Heart right ventricle (tissue), 16 donors: ENCODE measurements at regions of chr11 and their contacts with region 1.

Region 1: GRCh38 chr11:63838678-63839507 is at the start of gene MARK2:
- DNase-seq: peak; percentile 98 to 99
- ATAC-seq: peak; percentile 90 to 96 (median 94)
- H3K4me3 ChIP-seq: peak within 1 kb of the TSS; percentile 54 to 97 (median 92)
- H3K27ac ChIP-seq: peak within 1 kb of the TSS; percentile 70 to 95 (median 86)
- H3K4me1 ChIP-seq: peaks cover 17 to 59% (median 53%) of the 10 kb centered on the region in 9 donors
- H3K27me3 ChIP-seq: no peaks in the 10 kb centered on the region
- CTCF ChIP-seq: no peak
- total RNA-seq, gene MARK2: 33.8 to 42.7 (median 39.0) TPM

Region 2: DNA sequence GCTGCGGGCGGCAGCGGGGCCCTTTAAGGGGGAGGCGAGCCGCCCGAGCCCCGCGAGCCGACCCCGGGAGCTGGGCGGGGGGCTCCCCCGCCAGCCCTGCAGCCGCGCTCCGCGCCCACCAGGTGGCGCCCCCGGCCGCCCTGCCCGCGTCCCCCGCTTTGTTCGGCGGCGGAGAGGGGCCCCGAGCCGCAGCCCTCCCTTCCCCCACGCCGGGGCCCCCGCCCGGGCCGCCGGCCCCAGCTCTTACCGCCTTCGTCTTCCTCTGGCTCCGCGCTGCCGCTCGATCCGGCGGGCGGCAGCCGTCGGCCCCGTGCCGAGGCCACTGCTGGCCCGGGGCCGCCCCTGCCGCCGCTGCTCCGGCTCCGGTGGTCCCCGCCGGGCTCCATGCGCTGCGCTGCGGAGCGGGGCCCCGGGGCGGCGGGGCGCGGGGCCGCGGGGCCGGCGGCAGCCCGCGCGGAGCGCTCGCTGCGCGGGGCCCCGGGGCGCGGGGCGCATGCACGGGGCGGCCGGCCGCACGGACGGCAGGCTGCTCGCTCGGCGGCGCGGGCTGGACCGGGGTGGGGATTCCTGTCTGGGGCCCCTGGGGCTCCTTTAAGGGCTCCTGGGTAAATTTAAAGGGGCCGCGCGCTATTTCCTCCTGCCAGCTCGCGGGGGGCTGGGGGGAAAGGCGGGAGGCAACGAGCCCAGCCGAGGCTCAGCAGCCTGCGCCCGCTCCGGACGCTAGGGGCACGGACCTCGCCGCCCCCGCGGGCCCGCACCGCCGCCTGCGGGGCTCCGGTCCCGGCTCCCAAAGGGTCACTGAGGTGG is 70.5 kb before region 1 on chr11 and contains the start of gene ZFTA:
- intact Hi-C with region 1: loop called in 2 of 10 experiments (anchors 2 kb)
- DNase-seq: peak; percentile 74 to 75
- ATAC-seq: peak; percentile 7 to 51 (median 26)
- H3K4me3 ChIP-seq: peak within 1 kb of the TSS; percentile 70 to 89 (median 84)
- H3K27ac ChIP-seq: peak within 1 kb of the TSS; percentile 60 to 94 (median 86)
- H3K4me1 ChIP-seq: peaks cover 7 to 40% (median 25%) of the 10 kb centered on the region in 9 donors
- H3K27me3 ChIP-seq: peaks cover 0 to 23% (median 0%) of the 10 kb centered on the region in 7 donors
- CTCF ChIP-seq: peak; percentile 26 to 96 (median 65)
- total RNA-seq, gene ZFTA: 6.8 to 14.3 (median 8.9) TPM

Region 3: DNA sequence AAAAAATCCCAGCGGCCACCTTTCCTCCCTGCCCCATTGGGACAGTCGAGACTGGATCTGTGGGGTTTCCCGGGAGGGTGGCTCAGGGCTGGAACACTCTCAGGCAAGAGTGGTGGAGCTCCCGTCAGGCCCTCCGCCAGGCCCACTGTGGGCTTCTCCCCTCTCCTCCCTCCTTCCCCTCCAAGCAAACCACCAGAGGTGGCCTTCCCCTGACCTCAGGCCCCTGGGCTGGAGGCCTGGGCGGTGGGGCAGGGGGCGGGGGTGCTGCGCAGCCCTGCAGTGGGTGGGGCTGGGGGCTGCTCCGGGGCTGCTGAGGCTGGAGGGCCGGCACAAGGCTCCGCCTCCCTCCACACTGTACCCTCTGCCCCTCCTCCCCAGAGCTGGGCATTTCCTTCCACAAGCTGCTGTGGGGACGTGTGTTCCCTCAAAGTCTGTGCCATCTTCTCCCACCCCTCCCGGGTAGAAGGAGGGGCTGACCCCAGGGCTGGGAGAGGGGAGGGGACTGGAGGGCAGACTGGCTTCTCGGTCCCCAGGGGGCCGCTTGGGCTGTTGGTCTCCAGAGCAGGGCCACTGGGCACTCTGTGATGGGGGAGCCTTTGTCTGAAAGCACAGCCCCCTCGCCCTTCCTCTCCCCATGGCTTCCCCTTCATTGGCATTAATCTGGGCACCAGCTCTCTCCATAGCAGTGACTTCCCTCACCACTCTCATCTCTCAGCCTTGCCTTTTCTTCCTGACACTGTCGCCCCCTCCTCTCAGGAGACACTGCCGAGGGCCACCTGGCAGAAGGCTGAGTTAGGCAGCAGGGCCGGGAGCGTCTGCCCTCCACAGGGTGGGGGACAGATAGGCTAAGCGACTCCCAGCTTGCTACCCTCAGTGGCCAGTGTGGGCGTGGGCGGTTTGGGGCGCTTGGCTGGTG is 71.0 kb after region 1 on chr11:
- intact Hi-C with region 1: loop called in 1 of 10 experiments (anchors 2 kb)
- DNase-seq: no peak
- ATAC-seq: peak in 3 of 8 donors; percentile 10 to 18 (median 13)
- H3K4me3 ChIP-seq: no peak overlapping the region
- H3K27ac ChIP-seq: peak overlapping the region in 2 of 10 donors; percentile 10 to 19
- H3K4me1 ChIP-seq: peaks cover 4 to 41% (median 13%) of the 10 kb centered on the region in 9 donors
- H3K27me3 ChIP-seq: no peaks in the 10 kb centered on the region
- CTCF ChIP-seq: no peak

Region 4: GRCh38 chr11:63945477-63946163 is 106.7 kb after region 1 on chr11:
- intact Hi-C with region 1: loop called (anchors 1 to 2 kb)
- DNase-seq: peak; percentile 46 to 77
- ATAC-seq: peak; percentile 79 to 94 (median 85)
- H3K4me3 ChIP-seq: peak overlapping the region in 7 of 10 donors; percentile 13 to 41 (median 30)
- H3K27ac ChIP-seq: peak overlapping the region; percentile 20 to 79 (median 72)
- H3K4me1 ChIP-seq: peaks cover 8 to 44% (median 21%) of the 10 kb centered on the region in 9 donors
- H3K27me3 ChIP-seq: no peaks in the 10 kb centered on the region
- CTCF ChIP-seq: peak; percentile 58 to 88 (median 80)

Region 5: DNA sequence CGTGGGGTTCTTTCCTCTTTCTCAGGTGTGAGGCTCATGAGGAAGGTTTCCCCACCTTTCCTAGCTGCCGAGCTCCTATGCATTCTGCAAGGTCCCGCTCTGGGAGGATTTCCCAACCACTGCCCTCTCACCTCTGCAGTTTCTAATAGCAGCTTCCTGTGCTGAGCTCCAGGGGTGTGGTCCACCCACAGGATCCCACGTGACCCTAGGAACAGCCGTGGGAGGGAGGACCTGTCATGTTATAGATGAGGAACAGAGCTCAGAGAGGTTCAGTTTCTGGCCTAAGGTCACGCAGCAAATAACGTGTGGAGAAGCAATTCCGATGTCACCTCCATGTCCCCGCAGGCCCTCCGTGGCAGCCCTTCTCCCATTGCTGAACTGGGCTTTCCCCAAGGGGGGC is 235.3 kb after region 1 on chr11:
- intact Hi-C with region 1: no loop called
- DNase-seq: no peak
- ATAC-seq: no peak
- H3K4me3 ChIP-seq: no peak overlapping the region
- H3K27ac ChIP-seq: no peak overlapping the region
- H3K4me1 ChIP-seq: peaks cover 7 to 68% (median 36%) of the 10 kb centered on the region in 9 donors
- H3K27me3 ChIP-seq: no peaks in the 10 kb centered on the region
- CTCF ChIP-seq: no peak

Region 6: DNA sequence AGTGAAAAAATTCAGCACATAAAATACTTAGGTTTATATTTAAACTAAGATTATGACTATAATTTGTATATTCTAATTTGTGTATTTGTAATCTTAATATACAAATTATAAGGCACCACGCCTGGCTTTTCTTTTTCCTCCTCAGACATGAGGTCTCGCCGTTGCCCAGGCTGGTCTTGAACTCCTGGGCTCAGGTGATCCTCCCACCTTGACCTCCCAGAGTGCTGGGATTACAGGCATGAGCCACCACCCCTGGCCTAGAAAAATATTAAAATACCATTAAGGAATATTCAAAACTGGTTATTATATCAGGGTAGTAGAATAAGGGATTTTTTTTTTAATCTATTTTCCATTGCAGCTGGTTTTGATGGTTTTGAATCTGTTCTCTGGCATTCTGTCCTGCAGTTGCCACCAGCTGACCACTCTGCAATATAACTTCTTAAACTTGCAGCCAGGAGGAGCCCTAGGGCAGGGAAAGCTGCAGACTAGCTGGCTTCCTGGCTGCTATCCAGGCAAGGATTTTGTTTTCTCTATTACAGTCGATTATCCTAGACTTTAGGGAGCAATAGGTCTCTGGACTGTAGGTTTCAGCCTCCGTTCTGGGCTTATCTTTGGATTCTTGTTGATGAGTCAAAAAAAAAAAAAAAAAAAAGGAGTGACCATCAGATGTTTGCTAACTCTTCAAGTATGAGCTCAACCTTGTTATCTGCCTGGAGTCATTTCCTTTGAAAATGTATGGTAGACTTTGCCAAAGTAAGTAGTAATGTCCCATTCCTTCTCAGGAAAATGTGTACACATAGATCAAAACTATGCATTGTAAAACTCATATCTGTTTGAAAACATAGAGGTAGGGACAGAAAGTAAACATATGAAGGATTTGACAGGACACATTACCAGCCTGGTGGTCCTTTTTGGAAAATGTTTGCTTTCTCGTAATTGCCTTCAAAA is 1436.1 kb after region 1 on chr11:
- intact Hi-C with region 1: loop called in 1 of 10 experiments (anchors 5 kb)
- DNase-seq: peak; percentile 47 to 92
- ATAC-seq: peak; percentile 85 to 93 (median 90)
- H3K4me3 ChIP-seq: peak overlapping the region in 1 of 10 donors; percentile 33
- H3K27ac ChIP-seq: peak overlapping the region in 9 of 10 donors; percentile 11 to 74 (median 52)
- H3K4me1 ChIP-seq: peaks cover 0 to 34% (median 15%) of the 10 kb centered on the region in 9 donors
- H3K27me3 ChIP-seq: no peaks in the 10 kb centered on the region
- CTCF ChIP-seq: peak; percentile 63 to 93 (median 82)